ENCODE measurements at regions of chr4 and their contacts with region 1.

Region 1: GRCh38 chr4:88033309-88033708 is 25.9 kb downstream of the PKD2 start:
- DNase-seq: peak; percentile 34
- ATAC-seq: peak; percentile 68
- H3K4me3 ChIP-seq: no peak overlapping the region
- H3K27ac ChIP-seq: no peak overlapping the region
- H3K4me1 ChIP-seq: no peaks in the 10 kb centered on the region
- H3K27me3 ChIP-seq: no peaks in the 10 kb centered on the region
- CTCF ChIP-seq: peak; percentile 60 to 71 (median 61)
- POLR2A ChIP-seq: no peak
- RAD21 ChIP-seq: peak; percentile 79

Region 2: GRCh38 chr4:88021824-88022223 is 11.5 kb before region 1 on chr4:
- CTCF ChIA-PET with region 1: interaction called, 16 read pairs
- POLR2A ChIA-PET with region 1: no interaction called
- RAD21 ChIA-PET with region 1: no interaction called
- intact Hi-C with region 1: no loop called
- DNase-seq: no peak
- ATAC-seq: no peak
- H3K4me3 ChIP-seq: no peak overlapping the region
- H3K27ac ChIP-seq: no peak overlapping the region
- H3K4me1 ChIP-seq: peaks cover 3 to 6% of the 10 kb centered on the region in 2 experiments; a peak in 1 of 4 replicates
- H3K27me3 ChIP-seq: no peaks in the 10 kb centered on the region
- CTCF ChIP-seq: no peak
- POLR2A ChIP-seq: no peak
- RAD21 ChIP-seq: no peak

Region 3: GRCh38 chr4:88204882-88205281 is 171.6 kb after region 1 on chr4:
- CTCF ChIA-PET with region 1: interaction called, 74 read pairs
- POLR2A ChIA-PET with region 1: no interaction called
- RAD21 ChIA-PET with region 1: interaction called in 1 of 2 experiments, 17 read pairs
- intact Hi-C with region 1: no loop called
- DNase-seq: no peak
- ATAC-seq: no peak
- H3K4me3 ChIP-seq: no peak overlapping the region
- H3K27ac ChIP-seq: no peak overlapping the region
- H3K4me1 ChIP-seq: no peaks in the 10 kb centered on the region
- H3K27me3 ChIP-seq: no peaks in the 10 kb centered on the region
- CTCF ChIP-seq: no peak
- POLR2A ChIP-seq: no peak
- RAD21 ChIP-seq: no peak

Region 4: GRCh38 chr4:88456757-88457306 is 423.5 kb after region 1 on chr4 and contains the start of gene HERC5:
- CTCF ChIA-PET with region 1: no interaction called
- POLR2A ChIA-PET with region 1: no interaction called
- RAD21 ChIA-PET with region 1: no interaction called
- intact Hi-C with region 1: loop called (anchors 5 kb)
- DNase-seq: peak; percentile 85
- ATAC-seq: peak; percentile 91
- H3K4me3 ChIP-seq: peak within 1 kb of the TSS; percentile 50 to 64
- H3K27ac ChIP-seq: peak within 1 kb of the TSS; percentile 40; the same call in 1 of the 2 replicates
- H3K4me1 ChIP-seq: peaks cover 3 to 21% of the 10 kb centered on the region in 2 experiments; a peak in 2 of 4 replicates
- H3K27me3 ChIP-seq: no peaks in the 10 kb centered on the region
- CTCF ChIP-seq: peak; percentile 60 to 73 (median 65)
- POLR2A ChIP-seq: no peak
- RAD21 ChIP-seq: peak; percentile 82
- total RNA-seq, gene HERC5: 7.2 TPM